ENCODE measurements at regions of chr4 and their contacts with region 1.

Region 1: GRCh38 chr4:81471588-81472288 is at the start of gene RASGEF1B:
- DNase-seq: peak; percentile 96
- ATAC-seq: peak; percentile 85 to 96 (median 89)
- H3K4me3 ChIP-seq: peak within 1 kb of the TSS; percentile 97
- H3K4me3 Mint-ChIP-seq: peak within 1 kb of the TSS; percentile 97
- H3K27ac ChIP-seq: peak within 1 kb of the TSS; percentile 99
- H3K27ac Mint-ChIP-seq: peak within 1 kb of the TSS; percentile 82 to 98
- H3K4me1 ChIP-seq: peaks cover 25% of the 10 kb centered on the region
- H3K4me1 Mint-ChIP-seq: peaks cover 46 to 50% of the 10 kb centered on the region in 2 donors
- H3K27me3 ChIP-seq: no peaks in the 10 kb centered on the region
- H3K27me3 Mint-ChIP-seq: no peaks in the 10 kb centered on the region
- CTCF ChIP-seq: no peak
- total RNA-seq, gene RASGEF1B: 42.9 to 106 (median 90.8) TPM

Region 2: DNA sequence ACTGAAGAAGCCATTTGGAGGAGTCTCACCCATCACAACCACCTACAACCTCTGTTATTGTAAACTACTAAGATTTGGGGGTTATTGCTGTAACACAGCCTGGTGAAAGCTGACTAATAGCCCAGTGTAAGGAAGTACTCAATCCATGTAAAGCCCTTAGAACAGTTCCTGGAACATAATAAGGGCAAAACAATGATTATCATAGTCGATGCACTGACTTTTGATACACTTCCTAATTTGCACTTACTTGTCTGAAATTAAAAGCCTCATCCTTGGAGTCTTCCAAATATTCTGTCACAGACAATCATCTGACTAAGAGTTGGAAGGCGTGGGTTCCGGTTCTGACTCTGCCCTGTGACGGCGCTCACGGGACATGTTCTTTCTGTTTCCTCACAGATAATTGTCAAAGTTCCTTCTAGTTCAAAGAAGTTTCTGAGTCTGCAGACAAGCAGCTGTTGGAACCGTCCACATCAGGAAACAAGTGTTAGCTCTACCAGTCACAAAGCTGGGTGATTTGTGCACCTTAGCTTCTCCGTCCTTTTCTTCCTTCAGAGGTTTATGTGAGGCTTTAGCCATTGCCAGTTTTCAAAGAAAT is 33.4 kb after region 1 on chr4:
- intact Hi-C with region 1: loop called (anchors 2 kb)
- DNase-seq: peak; percentile 55 to 80
- ATAC-seq: peak; percentile 64 to 82 (median 72)
- H3K4me3 ChIP-seq: no peak overlapping the region
- H3K4me3 Mint-ChIP-seq: peak overlapping the region; percentile 72
- H3K27ac ChIP-seq: peak overlapping the region; percentile 74
- H3K27ac Mint-ChIP-seq: peak overlapping the region; percentile 76 to 90
- H3K4me1 ChIP-seq: peaks cover 33% of the 10 kb centered on the region
- H3K4me1 Mint-ChIP-seq: peaks cover 41 to 43% of the 10 kb centered on the region in 2 donors
- H3K27me3 ChIP-seq: no peaks in the 10 kb centered on the region
- H3K27me3 Mint-ChIP-seq: no peaks in the 10 kb centered on the region
- CTCF ChIP-seq: no peak

Region 3: DNA sequence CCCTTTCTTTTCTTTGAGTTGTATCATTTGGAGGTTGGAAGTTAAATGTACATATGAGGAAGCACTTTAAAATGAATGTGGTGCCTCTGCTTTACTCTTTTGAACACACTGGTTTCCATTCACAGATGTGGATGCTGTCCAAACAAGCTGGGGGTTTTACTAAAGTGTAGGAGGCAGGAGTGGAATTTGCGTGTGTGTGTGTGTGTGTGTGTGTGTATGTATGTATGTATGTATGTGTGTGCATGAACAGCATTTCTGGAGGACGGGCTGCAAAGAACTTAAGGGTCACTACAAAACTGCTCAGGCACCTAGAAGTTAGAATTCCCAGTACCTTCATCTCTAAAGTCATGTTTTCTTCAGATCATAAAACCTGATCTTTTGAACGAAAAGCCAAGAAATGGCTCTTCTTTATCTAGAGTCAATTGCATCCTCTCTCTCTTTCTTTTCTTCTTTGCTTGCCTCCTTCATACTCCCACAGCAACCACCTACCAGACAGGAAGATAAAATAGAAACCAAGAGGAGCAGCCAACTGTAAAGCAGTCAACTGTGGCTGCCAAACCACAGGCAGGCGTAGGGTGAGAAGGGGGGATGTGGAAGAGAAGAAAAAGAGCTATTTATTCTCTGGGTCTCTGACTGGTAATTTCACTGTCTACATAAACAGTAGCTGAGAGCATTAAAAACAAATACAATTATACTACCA is 177.0 kb after region 1 on chr4:
- intact Hi-C with region 1: loop called (anchors 5 kb)
- DNase-seq: peak in 1 of 2 donors; percentile 66
- ATAC-seq: peak; percentile 81 to 96 (median 91)
- H3K4me3 ChIP-seq: no peak overlapping the region
- H3K4me3 Mint-ChIP-seq: peak overlapping the region; percentile 65
- H3K27ac ChIP-seq: no peak overlapping the region
- H3K27ac Mint-ChIP-seq: peak overlapping the region in 1 of 2 donors; percentile 42
- H3K4me1 ChIP-seq: peaks cover 10% of the 10 kb centered on the region
- H3K4me1 Mint-ChIP-seq: peaks cover 32 to 33% of the 10 kb centered on the region in 2 donors
- H3K27me3 ChIP-seq: no peaks in the 10 kb centered on the region
- H3K27me3 Mint-ChIP-seq: peaks cover 27 to 37% of the 10 kb centered on the region in 2 donors
- CTCF ChIP-seq: no peak

Region 4: DNA sequence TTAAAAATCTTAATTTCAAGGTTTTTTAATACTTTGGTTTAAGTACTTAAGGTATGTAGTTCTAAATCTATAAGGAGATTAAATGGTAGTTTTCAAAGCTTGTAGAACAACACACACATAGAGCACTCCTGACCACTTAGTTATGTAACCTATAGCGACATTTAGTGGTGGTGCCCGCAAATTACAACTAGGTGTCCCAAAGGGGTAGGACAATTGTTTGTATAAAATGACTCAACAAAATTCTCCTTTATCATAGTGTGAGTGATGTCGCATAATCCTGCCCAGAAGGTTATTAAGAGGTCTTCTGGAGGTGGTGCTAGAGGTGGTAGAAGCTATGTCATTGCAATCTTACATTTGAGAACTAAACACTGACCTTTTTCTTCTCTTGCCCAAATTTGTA is 373.0 kb after region 1 on chr4:
- intact Hi-C with region 1: loop called (anchors 1 kb)
- DNase-seq: peak; percentile 57 to 83
- ATAC-seq: peak; percentile 92 to 99 (median 97)
- H3K4me3 ChIP-seq: no peak overlapping the region
- H3K4me3 Mint-ChIP-seq: no peak overlapping the region
- H3K27ac ChIP-seq: no peak overlapping the region
- H3K27ac Mint-ChIP-seq: no peak overlapping the region
- H3K4me1 ChIP-seq: no peaks in the 10 kb centered on the region
- H3K4me1 Mint-ChIP-seq: no peaks in the 10 kb centered on the region
- H3K27me3 ChIP-seq: no peaks in the 10 kb centered on the region
- H3K27me3 Mint-ChIP-seq: peaks cover 7 to 23% of the 10 kb centered on the region in 2 donors
- CTCF ChIP-seq: peak; percentile 85

Measured in natural killer cell (primary cell).